ENCODE measurements at regions of chr18 and their contacts with region 1.

Region 1: DNA sequence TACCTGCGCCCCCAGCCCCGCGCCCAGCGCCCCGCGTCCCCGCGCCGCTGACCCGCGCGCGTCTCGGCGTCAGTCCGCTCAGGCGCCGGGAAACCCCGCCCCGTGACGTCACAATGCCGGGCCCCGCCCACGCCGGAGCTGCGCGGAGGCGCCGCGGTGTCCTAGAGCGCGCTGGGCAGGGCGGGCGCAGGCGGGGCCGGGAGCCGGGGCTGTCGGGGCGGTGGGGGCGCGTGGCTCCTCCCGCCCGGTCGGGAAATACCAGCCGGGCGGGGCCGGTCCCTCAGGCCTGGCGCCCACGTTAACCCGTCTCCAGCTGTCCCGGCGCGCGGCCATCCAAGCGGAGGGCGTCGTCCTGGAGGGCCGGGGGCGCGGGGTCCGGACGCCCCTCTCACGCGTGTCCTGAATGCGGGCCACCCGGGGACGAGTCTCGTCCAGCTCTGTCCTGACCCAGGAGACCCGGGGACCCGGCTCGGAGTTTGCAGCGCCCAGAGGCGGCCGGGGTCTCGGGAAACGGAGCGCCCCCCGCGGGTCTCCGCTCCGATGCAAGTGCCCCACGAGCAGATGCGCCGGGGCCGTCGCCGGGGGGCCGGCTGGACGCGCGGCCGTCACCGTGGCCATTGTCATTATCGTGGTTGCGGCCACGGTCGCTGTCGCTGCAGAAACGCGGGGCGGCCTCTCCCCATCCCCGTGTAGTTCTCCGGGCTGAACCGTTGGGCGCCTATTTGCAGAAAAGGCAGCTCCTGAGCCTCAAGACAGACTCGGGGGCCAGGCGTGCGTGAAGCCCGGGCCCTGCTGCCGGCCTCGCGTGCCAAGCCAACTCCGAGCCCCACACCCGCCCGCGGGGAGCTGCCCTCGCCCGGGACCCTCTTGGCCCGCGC is at the start of gene SLC66A2:
- DNase-seq: peak; percentile 78
- H3K4me3 ChIP-seq: peak within 1 kb of the TSS; percentile 50 to 96 (median 71)
- H3K27ac ChIP-seq: peak within 1 kb of the TSS; percentile 4
- H3K4me1 ChIP-seq: peaks cover 5% of the 10 kb centered on the region
- H3K27me3 ChIP-seq: no peaks in the 10 kb centered on the region
- CTCF ChIP-seq: peak in 1 of 2 donors; percentile 7
- POLR2A ChIP-seq: peak; percentile 43
- total RNA-seq, gene SLC66A2: 32.5 and 35.2 TPM in 2 replicates

Region 2: GRCh38 chr18:79092874-79093273 is 858.9 kb before region 1 on chr18:
- CTCF ChIA-PET with region 1: no interaction called
- POLR2A ChIA-PET with region 1: no interaction called
- dilution Hi-C with region 1: no loop called
- intact Hi-C with region 1: no loop called
- DNase-seq: no peak
- H3K4me3 ChIP-seq: no peak overlapping the region
- H3K27ac ChIP-seq: no peak overlapping the region
- H3K4me1 ChIP-seq: no peaks in the 10 kb centered on the region
- H3K27me3 ChIP-seq: no peaks in the 10 kb centered on the region
- CTCF ChIP-seq: no peak
- POLR2A ChIP-seq: no peak

Region 3: GRCh38 chr18:79679111-79679872 is 272.5 kb before region 1 on chr18 and contains the start of gene CTDP1:
- CTCF ChIA-PET with region 1: no interaction called
- POLR2A ChIA-PET with region 1: no interaction called
- dilution Hi-C with region 1: no loop called
- intact Hi-C with region 1: loop called (anchors 5 kb)
- DNase-seq: peak; percentile 99
- H3K4me3 ChIP-seq: peak within 1 kb of the TSS; percentile 82 to 99 (median 83)
- H3K27ac ChIP-seq: peak within 1 kb of the TSS; percentile 73
- H3K4me1 ChIP-seq: peaks cover 16% of the 10 kb centered on the region
- H3K27me3 ChIP-seq: no peaks in the 10 kb centered on the region
- CTCF ChIP-seq: no peak
- POLR2A ChIP-seq: peak; percentile 25
- total RNA-seq, gene CTDP1: 23.5 and 27.6 TPM in 2 replicates

Region 4: GRCh38 chr18:79790996-79791972 is 160.5 kb before region 1 on chr18:
- CTCF ChIA-PET with region 1: no interaction called
- POLR2A ChIA-PET with region 1: no interaction called
- dilution Hi-C with region 1: no loop called
- intact Hi-C with region 1: loop called (anchors 10 kb)
- DNase-seq: no peak
- H3K4me3 ChIP-seq: no peak overlapping the region
- H3K27ac ChIP-seq: no peak overlapping the region
- H3K4me1 ChIP-seq: peaks cover 2% of the 10 kb centered on the region
- H3K27me3 ChIP-seq: peaks cover 16 to 18% of the 10 kb centered on the region in 2 experiments
- CTCF ChIP-seq: no peak
- POLR2A ChIP-seq: no peak

Region 5: GRCh38 chr18:79815657-79816056 is 136.2 kb before region 1 on chr18:
- CTCF ChIA-PET with region 1: no interaction called
- POLR2A ChIA-PET with region 1: no interaction called
- dilution Hi-C with region 1: no loop called
- intact Hi-C with region 1: no loop called
- DNase-seq: no peak
- H3K4me3 ChIP-seq: no peak overlapping the region
- H3K27ac ChIP-seq: no peak overlapping the region
- H3K4me1 ChIP-seq: no peaks in the 10 kb centered on the region
- H3K27me3 ChIP-seq: peaks cover 0 to 2% of the 10 kb centered on the region in 2 experiments
- CTCF ChIP-seq: no peak
- POLR2A ChIP-seq: no peak

Region 6: DNA sequence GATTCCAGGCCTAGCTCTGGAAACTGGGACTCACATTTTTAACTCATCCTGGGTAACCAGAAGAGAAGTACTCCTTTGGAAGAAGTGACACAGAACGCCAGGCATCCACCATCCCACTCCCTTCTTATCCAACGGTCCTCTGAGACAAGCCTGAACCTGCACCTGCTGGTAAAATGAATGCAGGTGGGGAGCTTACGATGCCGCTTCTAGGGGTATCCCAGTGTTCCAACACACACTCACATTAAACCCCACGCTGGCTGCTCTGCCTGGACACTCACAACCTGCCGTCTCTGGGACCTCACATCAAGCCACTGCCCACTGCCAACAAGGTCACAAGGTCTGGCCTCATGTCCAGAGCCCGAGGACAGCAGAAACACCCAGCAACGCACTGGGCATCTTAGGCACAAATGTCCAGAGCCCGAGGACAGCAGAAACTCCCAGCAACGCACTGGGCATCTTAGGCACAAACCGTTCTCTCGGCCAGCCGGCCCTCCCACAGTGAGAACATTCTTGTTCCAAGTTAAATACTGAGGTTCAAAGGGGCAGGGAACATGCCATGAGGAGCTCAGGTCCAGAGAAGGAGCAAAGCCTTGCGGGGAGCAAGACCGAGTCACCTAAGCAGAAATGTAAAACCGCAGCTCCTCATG is 10.2 kb before region 1 on chr18:
- CTCF ChIA-PET with region 1: no interaction called
- POLR2A ChIA-PET with region 1: no interaction called
- dilution Hi-C with region 1: no loop called
- intact Hi-C with region 1: no loop called
- DNase-seq: no peak
- H3K4me3 ChIP-seq: no peak overlapping the region
- H3K27ac ChIP-seq: no peak overlapping the region
- H3K4me1 ChIP-seq: no peaks in the 10 kb centered on the region
- H3K27me3 ChIP-seq: no peaks in the 10 kb centered on the region
- CTCF ChIP-seq: no peak
- POLR2A ChIP-seq: no peak

Region 7: GRCh38 chr18:79964330-79965118 is 12.7 kb after region 1 on chr18 and contains the start of gene HSBP1L1:
- CTCF ChIA-PET with region 1: interaction called, 6 read pairs
- POLR2A ChIA-PET with region 1: interaction called, 4 read pairs
- dilution Hi-C with region 1: no loop called
- intact Hi-C with region 1: loop called (anchors 1 kb)
- DNase-seq: peak; percentile 40
- H3K4me3 ChIP-seq: peak within 1 kb of the TSS; percentile 31 to 44 (median 40)
- H3K27ac ChIP-seq: peak within 1 kb of the TSS; percentile 57
- H3K4me1 ChIP-seq: peaks cover 12% of the 10 kb centered on the region
- H3K27me3 ChIP-seq: peaks cover 8 to 11% of the 10 kb centered on the region in 2 experiments
- CTCF ChIP-seq: peak; percentile 9 to 39
- POLR2A ChIP-seq: no peak
- total RNA-seq, gene HSBP1L1: 3.7 and 5.2 TPM in 2 replicates

Region 8: GRCh38 chr18:80034068-80034851 is 82.4 kb after region 1 on chr18 and contains the start of gene RBFA:
- CTCF ChIA-PET with region 1: interaction called, 4 read pairs
- POLR2A ChIA-PET with region 1: no interaction called
- dilution Hi-C with region 1: no loop called
- intact Hi-C with region 1: loop called (anchors 1 kb)
- DNase-seq: peak; percentile 99
- H3K4me3 ChIP-seq: peak within 1 kb of the TSS; percentile 94 to 97 (median 96)
- H3K27ac ChIP-seq: peak within 1 kb of the TSS; percentile 39
- H3K4me1 ChIP-seq: peaks cover 9% of the 10 kb centered on the region
- H3K27me3 ChIP-seq: no peaks in the 10 kb centered on the region
- CTCF ChIP-seq: peak; percentile 32 to 49
- POLR2A ChIP-seq: peak; percentile 85
- total RNA-seq, gene RBFA: 30.5 and 34.8 TPM in 2 replicates